ENCODE measurements at regions of chr7 and their contacts with region 1.

Region 1: GRCh38 chr7:123871998-123872867 is 27.3 kb downstream of the HYAL4 start:
- DNase-seq: peak; percentile 42
- H3K4me3 ChIP-seq: no peak overlapping the region
- H3K27ac ChIP-seq: no peak overlapping the region
- H3K4me1 ChIP-seq: no peaks in the 10 kb centered on the region
- H3K27me3 ChIP-seq: no peaks in the 10 kb centered on the region
- CTCF ChIP-seq: peak; percentile 36

Region 2: GRCh38 chr7:123580406-123581161 is 291.6 kb before region 1 on chr7:
- intact Hi-C with region 1: loop called (anchors 10 kb)
- DNase-seq: peak; percentile 22
- H3K4me3 ChIP-seq: no peak overlapping the region
- H3K27ac ChIP-seq: no peak overlapping the region
- H3K4me1 ChIP-seq: no peaks in the 10 kb centered on the region
- H3K27me3 ChIP-seq: no peaks in the 10 kb centered on the region
- CTCF ChIP-seq: peak; percentile 38

Region 3: GRCh38 chr7:123770378-123770777 is 101.9 kb before region 1 on chr7:
- intact Hi-C with region 1: no loop called
- DNase-seq: no peak
- H3K4me3 ChIP-seq: no peak overlapping the region
- H3K27ac ChIP-seq: no peak overlapping the region
- H3K4me1 ChIP-seq: no peaks in the 10 kb centered on the region
- H3K27me3 ChIP-seq: no peaks in the 10 kb centered on the region
- CTCF ChIP-seq: no peak

Region 4: DNA sequence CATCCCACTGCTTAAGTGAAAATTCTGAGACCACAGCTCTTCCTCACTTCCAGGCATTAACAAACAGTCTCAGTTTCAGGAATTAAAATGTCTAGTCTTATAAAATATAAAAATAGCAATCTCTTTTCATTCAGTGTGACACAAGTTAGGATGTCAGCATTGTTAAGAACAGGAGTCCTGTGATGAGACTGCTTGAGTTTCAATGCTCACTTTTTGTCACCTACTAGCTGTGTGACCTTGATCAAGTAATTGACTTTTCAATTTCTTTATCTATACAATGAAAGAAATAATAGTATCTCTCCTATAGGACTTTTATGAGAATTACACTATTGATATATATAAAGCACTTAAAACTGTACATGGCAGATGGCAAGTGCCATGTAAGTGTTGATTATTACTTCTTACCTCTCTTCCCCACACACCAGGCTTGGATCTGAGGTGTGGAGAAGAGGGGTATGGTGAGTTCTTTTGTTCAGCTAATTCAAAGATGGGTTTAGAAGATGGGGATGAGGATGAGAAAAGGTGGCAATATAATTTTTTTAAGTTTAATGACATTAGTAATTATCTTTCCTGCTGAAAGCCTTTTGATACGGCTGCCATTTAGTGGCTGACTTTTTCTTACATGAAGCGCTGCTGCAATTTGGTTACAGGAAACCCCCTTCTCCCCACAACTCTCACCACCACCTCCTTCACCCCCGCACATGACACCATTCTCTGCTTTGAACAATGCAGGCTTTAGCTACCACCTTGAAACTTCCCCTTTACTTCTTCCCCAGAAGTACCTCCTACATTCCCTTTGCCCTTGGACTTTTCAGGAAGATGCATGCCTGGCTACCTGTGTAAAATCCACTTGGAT is 48.1 kb before region 1 on chr7:
- intact Hi-C with region 1: no loop called
- DNase-seq: no peak
- H3K4me3 ChIP-seq: no peak overlapping the region
- H3K27ac ChIP-seq: no peak overlapping the region
- H3K4me1 ChIP-seq: no peaks in the 10 kb centered on the region
- H3K27me3 ChIP-seq: no peaks in the 10 kb centered on the region
- CTCF ChIP-seq: no peak